Pancreas (tissue), 10 donors: ENCODE measurements at regions of chr11 and their contacts with region 1.

Region 1: DNA sequence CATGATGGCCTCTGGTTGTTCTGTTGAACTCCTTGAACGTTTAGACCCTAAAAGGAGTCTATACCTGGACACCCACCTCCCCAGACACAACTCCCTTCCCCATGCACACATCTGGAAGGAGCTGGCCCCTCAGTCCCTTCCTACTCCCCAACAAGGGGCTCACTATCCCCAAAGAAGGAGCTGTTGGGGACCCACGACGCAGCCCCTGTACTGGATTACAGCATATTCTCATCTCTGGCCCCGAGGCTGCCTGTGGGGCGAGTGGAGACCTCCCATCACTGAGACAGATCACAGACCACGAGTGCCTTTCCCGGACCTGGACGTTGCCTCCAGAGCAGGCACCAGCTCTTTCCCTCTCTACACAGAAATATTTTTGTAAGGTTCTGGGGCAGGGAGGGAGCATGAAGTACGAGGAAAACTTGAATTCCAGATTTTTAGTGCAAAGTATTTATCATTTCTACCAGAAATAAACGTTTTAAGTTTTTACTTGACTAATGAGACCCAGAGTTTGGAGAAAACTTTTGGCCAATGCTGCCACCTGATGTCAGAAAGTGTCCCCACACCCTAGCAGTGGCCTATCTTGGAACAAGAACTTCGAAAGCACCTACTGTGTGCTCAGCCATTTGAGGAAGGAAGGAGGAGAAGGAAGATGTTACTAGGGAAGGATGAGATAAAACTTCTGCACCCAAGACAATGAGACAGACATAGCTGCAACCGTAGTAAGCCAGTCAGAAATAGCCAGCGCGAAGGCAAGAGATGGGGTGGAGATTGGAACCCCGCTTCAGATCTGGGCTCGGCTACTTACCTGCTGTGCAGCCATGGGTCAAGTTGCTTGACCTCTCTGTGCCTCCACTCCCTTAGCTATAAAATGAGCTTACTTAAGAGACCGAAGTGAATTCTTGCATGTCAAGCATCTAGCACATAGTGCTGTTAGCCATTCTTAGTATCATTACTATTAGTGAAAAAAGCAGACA is 10.2 kb upstream of the POU2F3 start:
- DNase-seq: no peak
- ATAC-seq: peak in 3 of 4 donors; percentile 36 to 52 (median 45)
- H3K4me3 ChIP-seq: no peak overlapping the region
- H3K27ac ChIP-seq: no peak overlapping the region
- H3K4me1 ChIP-seq: no peaks in the 10 kb centered on the region
- H3K27me3 ChIP-seq: no peaks in the 10 kb centered on the region
- CTCF ChIP-seq: peak; percentile 21 to 47 (median 34)

Region 2: GRCh38 chr11:120172054-120172911 is 57.5 kb before region 1 on chr11:
- intact Hi-C with region 1: loop called (anchors 2 to 10 kb)
- DNase-seq: peak in 5 of 6 donors; percentile 63 to 88 (median 75)
- ATAC-seq: peak; percentile 57 to 78 (median 76)
- H3K4me3 ChIP-seq: no peak overlapping the region
- H3K27ac ChIP-seq: no peak overlapping the region
- H3K4me1 ChIP-seq: peaks cover 0 to 3% (median 0%) of the 10 kb centered on the region in 3 donors
- H3K27me3 ChIP-seq: no peaks in the 10 kb centered on the region
- CTCF ChIP-seq: peak; percentile 71 to 83 (median 74)

Region 3: DNA sequence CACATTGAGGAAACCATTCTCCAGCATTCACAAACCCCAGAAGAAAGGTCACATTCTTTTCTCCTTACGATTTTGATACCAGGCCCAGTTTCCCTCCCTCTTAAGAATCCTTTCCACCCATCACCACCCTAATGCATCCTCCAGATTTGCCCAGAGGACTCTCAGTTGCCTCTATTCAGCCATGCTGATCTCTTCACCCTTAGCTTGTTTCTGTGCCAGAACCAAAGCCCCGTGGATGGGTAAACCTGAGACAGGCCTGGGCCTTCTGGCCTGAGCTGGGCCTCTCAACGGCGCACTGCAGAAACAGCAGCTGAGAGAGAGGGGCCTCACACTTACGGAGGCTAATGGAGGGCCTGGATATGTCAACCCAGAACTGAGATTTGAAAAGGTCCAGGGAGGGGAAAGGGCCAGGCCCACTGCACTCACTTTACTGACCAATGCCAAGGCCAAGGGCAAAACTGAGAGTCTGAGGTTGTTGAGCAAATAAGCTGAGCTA is 51.1 kb before region 1 on chr11:
- intact Hi-C with region 1: loop called (anchors 2 to 10 kb)
- DNase-seq: peak in 1 of 6 donors; percentile 5
- ATAC-seq: no peak
- H3K4me3 ChIP-seq: no peak overlapping the region
- H3K27ac ChIP-seq: no peak overlapping the region
- H3K4me1 ChIP-seq: peaks cover 6 to 11% (median 8%) of the 10 kb centered on the region in 3 donors
- H3K27me3 ChIP-seq: no peaks in the 10 kb centered on the region
- CTCF ChIP-seq: no peak